CD4-positive, alpha-beta T cell (primary cell): ENCODE measurements at regions of chr11 and their contacts with region 1.

Region 1: GRCh38 chr11:61028272-61028761 is 56.8 kb downstream of the CD6 start:
- DNase-seq: peak in 13 of 14 experiments; percentile 43 to 86 (median 69)
- ATAC-seq: peak; percentile 17
- H3K4me3 ChIP-seq: peak overlapping the region; percentile 15
- H3K4me3 Mint-ChIP-seq: peak overlapping the region; percentile 84
- H3K27ac ChIP-seq: peak overlapping the region; percentile 45 to 84
- H3K27ac Mint-ChIP-seq: peak overlapping the region; percentile 99
- H3K4me1 ChIP-seq: peaks cover 63% of the 10 kb centered on the region
- H3K4me1 Mint-ChIP-seq: peaks cover 84% of the 10 kb centered on the region
- H3K27me3 ChIP-seq: no peaks in the 10 kb centered on the region
- H3K27me3 Mint-ChIP-seq: no peaks in the 10 kb centered on the region
- CTCF ChIP-seq: no peak

Region 2: DNA sequence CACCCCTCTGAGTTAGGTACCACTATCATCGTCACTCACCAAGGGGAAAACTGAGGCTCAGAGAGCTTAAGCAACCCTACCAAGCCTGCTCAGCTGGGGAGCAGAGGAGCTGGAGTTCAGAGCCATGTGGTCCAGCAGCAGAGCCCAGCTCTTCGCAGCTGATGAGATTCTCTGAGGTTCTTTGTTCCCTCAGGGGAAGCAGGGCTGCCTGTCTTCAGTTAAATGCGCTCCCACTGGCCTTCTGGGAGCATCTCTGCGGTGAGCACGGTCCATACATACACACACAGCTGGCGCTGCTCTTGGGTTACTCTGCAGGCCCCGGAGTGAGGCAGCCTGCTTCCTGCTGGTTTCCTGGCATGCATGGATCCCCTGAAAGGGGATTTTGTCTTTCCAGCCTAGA is 167.4 kb before region 1 on chr11:
- CTCF ChIA-PET with region 1: no interaction called
- POLR2A ChIA-PET with region 1: no interaction called
- intact Hi-C with region 1: no loop called
- DNase-seq: peak in 1 of 14 experiments; percentile 27
- ATAC-seq: no peak
- H3K4me3 ChIP-seq: no peak overlapping the region
- H3K4me3 Mint-ChIP-seq: no peak overlapping the region
- H3K27ac ChIP-seq: no peak overlapping the region
- H3K27ac Mint-ChIP-seq: no peak overlapping the region
- H3K4me1 ChIP-seq: peaks cover 11% of the 10 kb centered on the region
- H3K4me1 Mint-ChIP-seq: peaks cover 17% of the 10 kb centered on the region
- H3K27me3 ChIP-seq: no peaks in the 10 kb centered on the region
- H3K27me3 Mint-ChIP-seq: no peaks in the 10 kb centered on the region
- CTCF ChIP-seq: no peak

Region 3: GRCh38 chr11:60985991-60986915 is 42.1 kb before region 1 on chr11:
- CTCF ChIA-PET with region 1: interaction called, 3 read pairs
- POLR2A ChIA-PET with region 1: interaction called, 50 read pairs
- intact Hi-C with region 1: loop called (anchors 1 to 5 kb)
- DNase-seq: peak; percentile 81 to 99 (median 90)
- ATAC-seq: peak; percentile 81
- H3K4me3 ChIP-seq: peak overlapping the region; percentile 41
- H3K4me3 Mint-ChIP-seq: peak overlapping the region; percentile 72
- H3K27ac ChIP-seq: peak overlapping the region; percentile 86 to 95
- H3K27ac Mint-ChIP-seq: peak overlapping the region; percentile 94
- H3K4me1 ChIP-seq: peaks cover 91% of the 10 kb centered on the region
- H3K4me1 Mint-ChIP-seq: peaks cover 98% of the 10 kb centered on the region
- H3K27me3 ChIP-seq: no peaks in the 10 kb centered on the region
- H3K27me3 Mint-ChIP-seq: no peaks in the 10 kb centered on the region
- CTCF ChIP-seq: no peak

Region 4: GRCh38 chr11:61004180-61004611 is 24.1 kb before region 1 on chr11:
- CTCF ChIA-PET with region 1: no interaction called
- POLR2A ChIA-PET with region 1: interaction called, 14 read pairs
- intact Hi-C with region 1: no loop called
- DNase-seq: peak in 11 of 14 experiments; percentile 40 to 73 (median 55)
- ATAC-seq: peak; percentile 59
- H3K4me3 ChIP-seq: peak overlapping the region; percentile 30
- H3K4me3 Mint-ChIP-seq: peak overlapping the region; percentile 86
- H3K27ac ChIP-seq: peak overlapping the region; percentile 63 to 71
- H3K27ac Mint-ChIP-seq: peak overlapping the region; percentile 95
- H3K4me1 ChIP-seq: peaks cover 89% of the 10 kb centered on the region
- H3K4me1 Mint-ChIP-seq: peaks cover 92% of the 10 kb centered on the region
- H3K27me3 ChIP-seq: no peaks in the 10 kb centered on the region
- H3K27me3 Mint-ChIP-seq: no peaks in the 10 kb centered on the region
- CTCF ChIP-seq: no peak

Region 5: GRCh38 chr11:61061081-61061826 is 32.9 kb after region 1 on chr11:
- CTCF ChIA-PET with region 1: interaction called, 3 read pairs
- POLR2A ChIA-PET with region 1: interaction called, 18 read pairs
- intact Hi-C with region 1: loop called in 1 of 2 experiments (anchors 2 kb)
- DNase-seq: peak; percentile 43 to 92 (median 72)
- ATAC-seq: peak; percentile 78
- H3K4me3 ChIP-seq: peak overlapping the region; percentile 36
- H3K4me3 Mint-ChIP-seq: peak overlapping the region; percentile 82
- H3K27ac ChIP-seq: peak overlapping the region; percentile 74 to 85
- H3K27ac Mint-ChIP-seq: peak overlapping the region; percentile 92
- H3K4me1 ChIP-seq: peaks cover 82% of the 10 kb centered on the region
- H3K4me1 Mint-ChIP-seq: peaks cover 76% of the 10 kb centered on the region
- H3K27me3 ChIP-seq: no peaks in the 10 kb centered on the region
- H3K27me3 Mint-ChIP-seq: no peaks in the 10 kb centered on the region
- CTCF ChIP-seq: no peak

Region 6: DNA sequence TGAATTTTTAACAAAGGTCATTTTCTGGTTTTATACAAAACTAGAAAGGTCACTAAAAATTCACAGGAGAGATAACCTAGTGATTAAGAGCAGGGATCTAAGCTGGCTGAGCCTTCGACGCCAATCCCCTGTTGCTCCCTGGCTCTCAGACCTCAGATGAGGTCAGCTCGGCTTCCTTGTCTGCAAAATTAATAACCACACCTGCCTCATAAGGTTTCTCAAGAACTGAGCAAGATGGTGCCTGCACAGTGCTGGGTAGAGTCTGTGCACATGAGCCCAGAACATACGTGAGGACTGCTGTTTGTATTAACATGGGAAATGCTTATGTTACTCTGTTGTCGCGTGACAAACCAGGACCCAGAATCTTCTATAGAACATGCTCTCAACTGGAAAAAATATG is 49.6 kb after region 1 on chr11:
- CTCF ChIA-PET with region 1: interaction called, 4 read pairs
- POLR2A ChIA-PET with region 1: interaction called, 41 read pairs
- intact Hi-C with region 1: loop called (anchors 2 kb)
- DNase-seq: peak in 2 of 14 experiments; percentile 10 to 59
- ATAC-seq: no peak
- H3K4me3 ChIP-seq: no peak overlapping the region
- H3K4me3 Mint-ChIP-seq: peak overlapping the region; percentile 62
- H3K27ac ChIP-seq: peak overlapping the region; percentile 39 to 47
- H3K27ac Mint-ChIP-seq: peak overlapping the region; percentile 98
- H3K4me1 ChIP-seq: peaks cover 71% of the 10 kb centered on the region
- H3K4me1 Mint-ChIP-seq: peaks cover 95% of the 10 kb centered on the region
- H3K27me3 ChIP-seq: no peaks in the 10 kb centered on the region
- H3K27me3 Mint-ChIP-seq: no peaks in the 10 kb centered on the region
- CTCF ChIP-seq: no peak

Region 7: DNA sequence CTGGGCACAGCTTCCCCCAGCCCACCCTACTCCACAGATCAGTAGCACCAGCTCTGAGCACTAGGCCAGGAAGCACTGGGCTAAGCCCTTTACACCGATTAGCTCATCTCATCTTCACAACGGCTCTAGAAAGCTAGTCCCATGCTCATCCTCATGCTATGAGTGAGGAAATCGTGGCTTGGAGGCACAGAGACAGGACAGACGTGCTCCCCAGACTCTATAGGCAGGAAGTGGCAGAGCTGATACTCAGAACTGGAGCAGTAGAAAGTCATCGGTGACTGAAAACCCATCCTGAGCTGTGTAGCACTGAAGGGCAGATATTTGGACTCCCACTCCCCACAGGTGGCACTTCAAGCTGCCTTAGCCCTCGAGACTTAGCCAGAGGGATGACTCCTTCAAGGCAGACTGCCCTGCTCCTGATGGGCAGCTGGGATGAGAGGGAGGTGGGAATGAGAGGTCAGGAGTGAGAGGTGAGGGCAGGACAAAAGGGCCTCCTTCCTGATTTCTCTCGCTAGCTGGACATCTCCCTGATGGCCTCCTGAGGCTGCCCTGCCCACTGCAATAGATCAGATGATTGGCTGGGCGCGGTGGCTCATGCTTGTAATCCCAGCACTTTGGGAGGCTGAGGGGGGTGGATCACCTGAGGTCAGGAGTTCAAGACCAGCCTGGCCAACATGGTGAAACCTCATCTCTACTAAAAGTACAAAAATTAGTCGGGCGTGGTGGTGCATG is 83.6 kb after region 1 on chr11:
- CTCF ChIA-PET with region 1: no interaction called
- POLR2A ChIA-PET with region 1: interaction called, 42 read pairs
- intact Hi-C with region 1: loop called in 1 of 2 experiments (anchors 5 kb)
- DNase-seq: peak in 13 of 14 experiments; percentile 28 to 87 (median 52)
- ATAC-seq: peak; percentile 78
- H3K4me3 ChIP-seq: peak overlapping the region; percentile 24
- H3K4me3 Mint-ChIP-seq: peak overlapping the region; percentile 83
- H3K27ac ChIP-seq: peak overlapping the region; percentile 67 to 71
- H3K27ac Mint-ChIP-seq: no peak overlapping the region
- H3K4me1 ChIP-seq: peaks cover 100% of the 10 kb centered on the region
- H3K4me1 Mint-ChIP-seq: peaks cover 100% of the 10 kb centered on the region
- H3K27me3 ChIP-seq: no peaks in the 10 kb centered on the region
- H3K27me3 Mint-ChIP-seq: no peaks in the 10 kb centered on the region
- CTCF ChIP-seq: no peak

Region 8: DNA sequence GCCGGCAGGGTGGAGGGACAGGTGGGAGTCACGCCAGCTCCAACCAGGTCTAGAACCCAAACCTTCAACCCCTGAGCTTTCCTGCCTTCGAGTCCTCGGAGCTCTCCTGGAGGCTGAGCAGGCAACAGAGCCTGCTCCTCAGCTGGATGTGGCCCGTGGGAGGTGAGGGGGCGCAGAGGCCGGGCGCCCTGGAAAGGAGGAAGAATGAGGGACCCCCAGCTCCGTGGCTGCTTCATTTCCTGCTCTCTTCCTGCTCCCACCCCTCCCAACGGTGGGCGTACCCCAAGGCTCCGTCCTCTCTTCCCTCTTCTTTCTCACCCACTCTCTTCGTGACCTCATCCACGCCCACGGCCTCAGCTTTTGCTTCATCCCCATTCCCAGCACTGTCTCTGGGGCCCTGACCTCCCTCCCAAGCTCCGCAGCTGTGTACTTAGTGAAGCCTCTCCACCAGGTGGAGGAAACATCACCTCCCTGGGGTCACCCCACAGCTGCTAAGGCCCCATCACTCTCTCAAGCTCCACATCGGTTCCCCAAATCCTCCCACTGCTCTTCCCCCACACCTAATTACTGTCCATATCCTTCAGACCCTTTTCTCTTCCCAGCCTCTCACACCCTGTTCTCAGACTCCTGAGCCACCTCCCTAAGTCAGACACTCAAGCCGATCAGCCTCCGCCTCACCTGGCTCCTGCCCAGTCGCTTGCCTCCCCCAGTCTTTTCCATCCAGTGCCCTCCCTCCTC is 560.3 kb after region 1 on chr11:
- CTCF ChIA-PET with region 1: no interaction called
- POLR2A ChIA-PET with region 1: no interaction called
- intact Hi-C with region 1: no loop called
- DNase-seq: no peak
- ATAC-seq: no peak
- H3K4me3 ChIP-seq: peak overlapping the region; percentile 61
- H3K4me3 Mint-ChIP-seq: peak overlapping the region; percentile 87
- H3K27ac ChIP-seq: no peak overlapping the region
- H3K27ac Mint-ChIP-seq: no peak overlapping the region
- H3K4me1 ChIP-seq: peaks cover 19% of the 10 kb centered on the region
- H3K4me1 Mint-ChIP-seq: peaks cover 13% of the 10 kb centered on the region
- H3K27me3 ChIP-seq: peaks cover 0 to 9% of the 10 kb centered on the region in 2 experiments
- H3K27me3 Mint-ChIP-seq: peaks cover 60% of the 10 kb centered on the region
- CTCF ChIP-seq: no peak